OCI-LY7 (cell line): ENCODE measurements at regions of chr10 and their contacts with region 1.

Region 1: GRCh38 chr10:15859906-15860691 is at the start of gene MINDY3:
- DNase-seq: peak; percentile 91
- H3K4me3 ChIP-seq: peak within 1 kb of the TSS; percentile 92
- H3K27ac ChIP-seq: peak within 1 kb of the TSS; percentile 69
- H3K4me1 ChIP-seq: peaks cover 25% of the 10 kb centered on the region
- CTCF ChIP-seq: no peak
- total RNA-seq, gene MINDY3: 15.7 and 16.2 TPM in 2 replicates

Region 2: DNA sequence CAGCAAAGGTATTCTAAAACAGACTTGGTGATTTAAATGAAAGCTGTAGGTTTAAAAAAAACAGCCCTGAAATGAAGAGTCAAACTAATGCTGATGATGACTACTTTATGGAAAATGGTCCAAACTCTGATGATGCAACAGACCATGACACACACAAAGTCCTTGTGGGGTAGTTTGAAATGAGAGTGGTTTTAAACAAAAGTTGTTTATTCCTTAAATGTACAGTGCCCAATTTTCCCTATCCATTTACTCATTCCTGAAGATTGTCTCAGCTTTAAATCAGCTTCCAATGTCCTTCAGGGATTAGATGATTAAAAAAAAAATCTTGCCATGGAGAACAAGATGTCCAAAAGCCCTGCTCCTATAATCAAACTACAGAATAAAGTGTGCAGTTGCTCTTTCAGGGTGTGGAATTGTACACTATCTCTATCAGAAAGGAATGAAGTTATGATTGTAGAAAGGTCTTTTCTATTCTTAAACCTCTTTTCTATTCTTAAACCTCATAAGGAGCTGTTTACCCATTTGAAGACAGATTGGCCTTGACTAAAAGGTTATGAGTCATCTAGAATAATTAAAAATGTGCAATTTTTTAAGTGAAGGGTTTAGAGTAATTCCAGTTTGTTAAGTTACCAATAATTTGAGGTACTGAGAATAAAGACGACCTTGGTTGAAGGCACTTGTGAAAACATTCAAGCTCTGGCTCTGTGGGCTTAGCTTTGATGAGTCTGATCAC is 70.1 kb before region 1 on chr10:
- CTCF ChIA-PET with region 1: no interaction called
- POLR2A ChIA-PET with region 1: interaction called, 4 read pairs
- intact Hi-C with region 1: loop called (anchors 5 kb)
- DNase-seq: no peak
- H3K4me3 ChIP-seq: no peak overlapping the region
- H3K27ac ChIP-seq: no peak overlapping the region
- H3K4me1 ChIP-seq: peaks cover 31% of the 10 kb centered on the region
- CTCF ChIP-seq: no peak

Region 3: GRCh38 chr10:15943426-15943825 is 83.3 kb after region 1 on chr10:
- CTCF ChIA-PET with region 1: no interaction called
- POLR2A ChIA-PET with region 1: no interaction called
- intact Hi-C with region 1: no loop called
- DNase-seq: no peak
- H3K4me3 ChIP-seq: no peak overlapping the region
- H3K27ac ChIP-seq: no peak overlapping the region
- H3K4me1 ChIP-seq: no peaks in the 10 kb centered on the region
- CTCF ChIP-seq: no peak

Region 4: DNA sequence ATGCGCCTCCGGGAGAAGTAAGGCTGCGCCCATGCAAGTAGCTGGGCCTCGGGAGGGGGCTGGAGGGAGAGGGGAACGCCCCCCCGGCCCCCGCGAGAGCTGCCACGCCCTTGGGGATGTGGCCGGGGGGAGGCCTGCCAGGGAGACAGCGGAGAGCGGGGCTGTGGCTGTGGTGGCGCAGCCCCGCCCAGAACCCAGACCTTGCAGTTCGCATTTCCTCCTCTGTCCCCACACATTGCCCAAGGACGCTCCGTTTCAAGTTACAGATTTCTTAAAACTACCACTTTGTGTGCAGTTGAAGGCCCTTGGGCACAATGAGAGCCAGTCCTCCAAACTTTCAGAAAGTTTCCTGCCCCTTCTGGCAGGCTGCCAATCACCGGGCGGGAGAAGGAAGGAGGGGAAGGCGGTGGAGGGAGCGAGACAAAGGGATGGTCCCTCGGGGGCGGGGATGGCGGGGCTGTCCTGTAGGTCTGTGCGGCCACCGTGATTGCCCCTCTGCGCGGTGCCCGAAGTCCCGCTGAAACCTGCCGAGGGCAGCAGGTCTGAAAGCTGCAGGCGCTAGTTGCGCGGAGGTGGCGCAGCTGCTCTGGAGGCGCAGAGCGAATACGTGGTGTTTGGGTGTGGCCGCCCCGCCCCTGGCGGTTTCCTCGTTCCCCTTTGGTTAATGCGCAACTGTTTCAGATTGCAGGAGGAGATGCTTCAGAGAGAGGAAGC is 1370.0 kb after region 1 on chr10:
- CTCF ChIA-PET with region 1: no interaction called
- POLR2A ChIA-PET with region 1: no interaction called
- intact Hi-C with region 1: loop called (anchors 10 kb)
- DNase-seq: peak; percentile 92
- H3K4me3 ChIP-seq: peak overlapping the region; percentile 77
- H3K27ac ChIP-seq: peak overlapping the region; percentile 57
- H3K4me1 ChIP-seq: peaks cover 29% of the 10 kb centered on the region
- CTCF ChIP-seq: no peak

Region 5: DNA sequence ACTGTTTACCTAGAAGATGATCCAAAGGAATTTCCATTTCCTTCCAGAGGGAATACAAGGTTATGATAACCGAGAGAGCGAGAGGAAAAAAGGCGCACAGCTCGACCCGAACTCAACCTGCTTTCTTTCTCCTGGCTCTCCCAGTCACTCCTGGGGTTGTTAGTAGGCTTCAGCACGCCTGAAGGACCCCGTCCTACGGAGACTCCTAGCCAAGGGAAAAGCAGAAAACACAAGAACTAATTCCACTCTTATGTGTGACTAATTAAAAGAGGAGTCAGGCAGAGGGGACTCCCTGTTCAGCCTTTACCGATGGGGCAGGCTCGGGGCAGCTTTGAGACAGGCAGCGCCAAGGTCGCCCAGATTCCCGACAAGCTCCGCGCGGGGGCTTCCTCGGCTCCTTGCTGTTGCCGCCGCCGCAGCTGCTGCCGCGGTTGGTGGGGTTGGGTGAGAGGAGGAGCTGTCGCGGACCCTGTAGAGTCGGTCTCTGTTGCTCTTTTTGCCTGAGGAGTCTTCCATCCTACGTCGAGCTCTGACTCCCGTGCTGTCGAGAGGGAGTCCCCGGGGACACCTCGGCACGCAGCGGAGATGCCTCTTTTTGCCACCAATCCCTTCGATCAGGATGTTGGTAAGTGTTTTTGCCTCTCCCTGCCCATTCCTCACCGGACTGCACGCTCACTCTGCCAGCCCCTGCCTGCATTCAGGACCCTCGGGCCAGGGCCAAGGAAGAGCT is 1783.8 kb after region 1 on chr10 and contains the start of gene STAM:
- CTCF ChIA-PET with region 1: no interaction called
- POLR2A ChIA-PET with region 1: no interaction called
- intact Hi-C with region 1: loop called (anchors 10 kb)
- DNase-seq: peak; percentile 94
- H3K4me3 ChIP-seq: peak within 1 kb of the TSS; percentile 86
- H3K27ac ChIP-seq: peak within 1 kb of the TSS; percentile 78
- H3K4me1 ChIP-seq: peaks cover 29% of the 10 kb centered on the region
- CTCF ChIP-seq: no peak; the same call in 1 of the 2 replicates
- total RNA-seq, gene STAM: 8.6 and 12.9 TPM in 2 replicates